ENCODE measurements at regions of chr16 and their contacts with region 1.

Region 1: GRCh38 chr16:84992717-84993075 is 18.6 kb downstream of the ZDHHC7 start:
- DNase-seq: no peak
- ATAC-seq: peak; percentile 59

Region 2: GRCh38 chr16:85210423-85211169 is 217.9 kb after region 1 on chr16:
- intact Hi-C with region 1: loop called (anchors 5 kb)
- DNase-seq: no peak
- ATAC-seq: no peak

Measured in sciatic nerve (tissue), 2 donors.